ENCODE measurements at regions of chr4 and their contacts with region 1.

Region 1: DNA sequence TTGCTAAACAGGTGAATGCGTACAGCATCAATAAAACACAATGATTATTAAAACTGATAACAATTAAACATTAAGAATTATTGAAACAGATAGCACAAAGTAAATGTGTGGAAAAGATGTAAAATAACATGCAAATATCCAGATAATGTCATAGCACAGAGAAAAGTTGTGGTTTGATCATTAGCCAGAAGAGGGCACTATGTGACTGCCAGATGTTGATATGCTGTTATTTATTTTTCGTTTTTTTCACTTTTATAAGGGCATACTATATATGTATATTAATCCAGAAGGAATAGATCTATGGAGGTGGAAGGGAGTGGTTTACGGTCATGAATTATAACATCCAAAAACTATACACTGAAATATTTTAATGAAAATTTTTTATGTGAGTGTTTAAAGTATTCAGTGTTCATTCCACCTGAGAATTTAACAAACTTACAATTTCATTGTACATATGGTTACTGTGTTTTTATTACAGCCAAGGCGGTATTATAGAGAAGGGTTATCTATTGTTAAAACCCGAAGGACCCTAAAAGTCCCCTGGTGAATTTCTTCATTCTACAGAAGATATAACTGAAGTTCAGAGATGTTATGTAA is 211.9 kb upstream of the UGT8 start:
- DNase-seq: no peak
- H3K4me3 ChIP-seq: no peak overlapping the region
- H3K27ac ChIP-seq: no peak overlapping the region
- H3K4me1 ChIP-seq: no peaks in the 10 kb centered on the region
- H3K27me3 ChIP-seq: no peaks in the 10 kb centered on the region
- CTCF ChIP-seq: peak in 2 of 3 experiments; percentile 51 to 56; a peak in 2 of 4 replicates
- EP300 ChIP-seq: no peak
- POLR2A ChIP-seq: no peak
- RAD21 ChIP-seq: peak; percentile 88 to 92

Region 2: GRCh38 chr4:113998079-113998478 is 388.7 kb before region 1 on chr4:
- CTCF ChIA-PET with region 1: interaction called, 11 read pairs
- POLR2A ChIA-PET with region 1: no interaction called
- DNase-seq: no peak
- H3K4me3 ChIP-seq: no peak overlapping the region
- H3K27ac ChIP-seq: no peak overlapping the region
- H3K4me1 ChIP-seq: peaks cover 2 to 5% (median 3%) of the 10 kb centered on the region in 4 experiments; a peak in 3 of 7 replicates
- H3K27me3 ChIP-seq: no peaks in the 10 kb centered on the region
- CTCF ChIP-seq: no peak
- EP300 ChIP-seq: no peak
- POLR2A ChIP-seq: no peak
- RAD21 ChIP-seq: no peak

Region 3: DNA sequence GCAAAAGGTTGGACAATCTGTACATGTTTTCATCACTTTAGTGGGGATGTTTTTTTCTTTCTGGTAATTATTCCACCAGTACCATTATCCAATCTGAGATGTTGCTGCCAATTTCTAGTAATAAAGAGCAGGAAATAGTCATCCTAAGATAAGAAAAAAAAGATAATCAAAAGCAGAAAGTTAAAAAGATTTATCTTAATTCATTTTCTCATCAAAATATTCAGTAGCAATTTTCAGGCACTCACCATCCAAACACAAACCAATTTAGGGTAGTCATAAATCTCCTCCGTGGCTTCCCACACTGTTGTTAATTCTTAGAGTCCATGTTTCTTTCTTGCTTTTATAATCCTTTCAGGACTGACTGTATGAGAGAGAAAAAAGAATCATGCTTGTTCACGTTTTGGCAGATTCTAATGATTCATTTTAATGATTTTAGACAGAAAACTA is 51.8 kb before region 1 on chr4:
- CTCF ChIA-PET with region 1: no interaction called
- POLR2A ChIA-PET with region 1: no interaction called
- DNase-seq: no peak
- H3K4me3 ChIP-seq: no peak overlapping the region
- H3K27ac ChIP-seq: no peak overlapping the region
- H3K4me1 ChIP-seq: no peaks in the 10 kb centered on the region
- H3K27me3 ChIP-seq: no peaks in the 10 kb centered on the region
- CTCF ChIP-seq: no peak
- EP300 ChIP-seq: no peak
- POLR2A ChIP-seq: no peak
- RAD21 ChIP-seq: no peak

Region 4: DNA sequence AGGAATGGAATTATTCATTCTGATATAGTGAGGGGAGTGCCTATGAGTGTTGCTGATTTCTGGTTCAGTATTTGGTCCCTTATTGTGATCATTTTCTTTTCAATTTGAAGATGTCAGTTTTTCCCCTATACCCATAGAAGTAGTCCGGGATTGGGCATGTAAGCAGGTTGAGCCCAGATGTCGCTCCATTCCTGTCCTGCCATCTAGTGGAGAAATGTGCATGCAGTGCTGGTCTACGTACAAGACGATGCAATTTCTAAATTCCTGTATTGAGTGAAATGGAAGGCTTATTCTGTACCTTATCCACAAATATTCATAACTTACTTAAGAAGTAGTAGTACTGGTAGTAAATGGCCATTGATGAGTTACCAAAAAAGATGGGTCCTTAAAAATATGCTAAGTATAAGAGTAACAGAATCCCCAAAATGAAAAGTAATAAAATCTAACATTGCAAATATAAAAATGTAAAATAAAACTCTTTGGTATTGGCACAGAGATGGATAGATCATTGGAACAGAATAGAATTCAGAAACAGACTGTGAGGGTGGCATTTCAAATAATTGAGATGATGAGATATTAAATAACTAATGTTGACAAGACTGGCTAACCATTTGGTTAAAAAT is 272.8 kb after region 1 on chr4:
- CTCF ChIA-PET with region 1: interaction called, 12 read pairs
- POLR2A ChIA-PET with region 1: no interaction called
- DNase-seq: peak; percentile 25 to 54
- H3K4me3 ChIP-seq: no peak overlapping the region
- H3K27ac ChIP-seq: no peak overlapping the region
- H3K4me1 ChIP-seq: peaks cover 0 to 8% (median 1%) of the 10 kb centered on the region in 4 experiments; a peak in 2 of 7 replicates
- H3K27me3 ChIP-seq: no peaks in the 10 kb centered on the region
- CTCF ChIP-seq: peak; percentile 75 to 92 (median 82)
- EP300 ChIP-seq: no peak
- POLR2A ChIP-seq: no peak
- RAD21 ChIP-seq: peak; percentile 92 to 93

Region 5: GRCh38 chr4:114694770-114695169 is 308.0 kb after region 1 on chr4:
- CTCF ChIA-PET with region 1: interaction called, 23 read pairs
- POLR2A ChIA-PET with region 1: no interaction called
- DNase-seq: no peak
- H3K4me3 ChIP-seq: no peak overlapping the region
- H3K27ac ChIP-seq: no peak overlapping the region
- H3K4me1 ChIP-seq: no peaks in the 10 kb centered on the region
- H3K27me3 ChIP-seq: peaks cover 0 to 1% (median 0%) of the 10 kb centered on the region in 4 experiments; a peak in 1 of 7 replicates
- CTCF ChIP-seq: peak in 2 of 3 experiments; percentile 34 to 43; a peak in 2 of 4 replicates
- EP300 ChIP-seq: no peak
- POLR2A ChIP-seq: no peak
- RAD21 ChIP-seq: peak; percentile 81 to 86